Posterior vena cava (tissue), 2 donors: ENCODE measurements at regions of chr4 and their contacts with region 1.

Region 1: GRCh38 chr4:15001869-15002658 is at the start of gene CPEB2:
- DNase-seq: peak; percentile 99
- total RNA-seq, gene CPEB2: 31.6 to 45.8 TPM

Region 2: GRCh38 chr4:14837860-14838259 is 164.2 kb before region 1 on chr4:
- intact Hi-C with region 1: loop called in 1 of 2 experiments (anchors 10 kb)
- DNase-seq: no peak

Region 3: DNA sequence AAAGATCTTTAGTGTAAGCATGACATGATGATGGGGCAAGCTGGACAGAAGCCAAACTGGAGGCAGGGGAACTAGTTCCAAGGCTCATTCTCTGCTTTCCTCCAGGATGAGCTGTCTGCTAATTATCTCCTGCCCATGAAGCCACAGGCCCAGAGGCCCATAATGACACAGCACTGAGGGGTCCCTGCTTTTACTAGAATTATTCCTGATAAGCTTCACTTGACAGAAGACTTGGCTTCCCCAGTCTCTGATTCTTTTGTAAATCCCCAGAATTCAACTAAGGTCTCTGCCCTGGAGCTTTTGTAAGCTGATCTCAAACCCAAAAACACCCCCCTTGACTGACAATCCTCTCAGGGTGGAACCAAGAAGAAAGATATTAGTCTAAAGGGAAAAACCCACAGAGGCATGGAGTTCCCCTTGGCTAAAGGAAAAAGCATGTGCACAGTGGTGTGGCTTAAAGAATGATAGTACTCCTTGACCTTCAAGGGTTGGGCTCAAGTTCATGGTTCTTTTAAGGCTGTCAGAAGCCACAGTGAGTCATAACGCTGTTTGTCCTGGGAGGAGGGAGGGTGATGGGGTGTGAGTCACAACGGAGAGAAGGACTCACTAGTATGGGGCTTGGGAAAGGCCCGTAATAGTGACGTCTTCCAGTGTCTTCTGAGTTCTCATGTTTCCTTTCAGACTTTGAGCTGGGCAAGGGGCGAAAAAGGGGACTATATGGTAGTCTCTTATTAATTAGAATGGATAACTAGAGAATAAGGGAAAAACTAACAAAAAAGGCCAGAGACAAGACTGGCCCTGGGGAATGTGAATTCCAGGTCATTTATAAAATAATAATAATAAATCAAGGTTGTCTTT is 145.8 kb before region 1 on chr4:
- intact Hi-C with region 1: loop called in 1 of 2 experiments (anchors 5 kb)
- DNase-seq: peak; percentile 88

Region 4: GRCh38 chr4:14977830-14978229 is 24.2 kb before region 1 on chr4:
- intact Hi-C with region 1: no loop called
- DNase-seq: no peak